Astrocyte of the cerebellum (primary cell): ENCODE measurements at regions of chr2 and their contacts with region 1.

Region 1: GRCh38 chr2:223459328-223459939 is 142.7 kb downstream of the SCG2 start:
- DNase-seq: no peak
- H3K4me3 ChIP-seq: no peak overlapping the region
- CTCF ChIP-seq: no peak

Region 2: DNA sequence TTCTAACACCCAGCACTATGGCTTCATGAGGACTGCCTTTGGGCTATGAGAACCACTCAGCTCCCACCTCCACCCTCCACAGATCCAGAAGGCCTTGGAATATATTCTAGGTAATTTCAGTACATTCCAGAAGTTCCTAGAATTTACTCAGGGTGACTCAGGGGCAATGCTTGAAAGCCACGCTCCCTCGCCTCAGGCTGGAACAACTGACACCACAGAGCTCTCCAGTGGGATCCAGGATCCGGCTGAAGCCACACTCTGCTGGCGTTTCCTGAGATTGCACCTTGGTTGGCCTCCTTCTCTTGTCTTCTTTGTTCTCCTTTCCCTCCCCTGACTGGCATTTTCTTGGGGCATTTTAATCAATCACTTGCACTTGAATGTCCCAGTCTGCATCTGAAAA is 500.1 kb before region 1 on chr2:
- in situ Hi-C with region 1: loop called (anchors 25 kb)
- DNase-seq: peak; percentile 73
- H3K4me3 ChIP-seq: no peak overlapping the region
- CTCF ChIP-seq: peak; percentile 62

Region 3: DNA sequence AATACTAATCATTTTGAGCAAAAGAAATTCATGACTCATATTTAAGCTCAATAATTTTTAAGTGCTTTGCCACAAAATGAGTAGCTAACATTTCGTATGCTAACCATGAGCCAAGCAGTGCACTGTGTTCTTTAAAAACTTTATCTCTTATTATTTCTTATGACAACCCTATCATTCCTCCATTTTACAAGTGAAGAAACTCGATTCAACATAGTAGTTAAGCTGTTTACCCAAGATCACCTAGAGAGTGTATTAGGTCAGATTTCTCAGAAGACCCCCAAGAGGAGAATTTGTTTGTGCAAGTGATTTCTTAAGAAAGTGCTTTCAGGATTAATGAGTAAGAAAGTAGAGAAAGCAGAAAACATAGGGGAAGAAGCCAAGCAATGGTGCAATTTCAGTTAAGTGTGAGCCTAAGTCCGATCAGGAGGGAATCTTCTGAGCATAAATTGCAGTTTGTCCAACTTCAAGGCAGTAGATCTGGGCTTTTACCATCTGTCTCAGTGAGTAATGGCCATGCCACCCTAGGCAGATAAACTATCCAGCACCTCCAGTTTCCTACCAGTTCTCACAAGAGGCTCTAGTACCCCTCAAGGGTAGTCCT is 60.0 kb before region 1 on chr2:
- in situ Hi-C with region 1: no loop called
- DNase-seq: no peak
- H3K4me3 ChIP-seq: no peak overlapping the region
- CTCF ChIP-seq: no peak

Region 4: DNA sequence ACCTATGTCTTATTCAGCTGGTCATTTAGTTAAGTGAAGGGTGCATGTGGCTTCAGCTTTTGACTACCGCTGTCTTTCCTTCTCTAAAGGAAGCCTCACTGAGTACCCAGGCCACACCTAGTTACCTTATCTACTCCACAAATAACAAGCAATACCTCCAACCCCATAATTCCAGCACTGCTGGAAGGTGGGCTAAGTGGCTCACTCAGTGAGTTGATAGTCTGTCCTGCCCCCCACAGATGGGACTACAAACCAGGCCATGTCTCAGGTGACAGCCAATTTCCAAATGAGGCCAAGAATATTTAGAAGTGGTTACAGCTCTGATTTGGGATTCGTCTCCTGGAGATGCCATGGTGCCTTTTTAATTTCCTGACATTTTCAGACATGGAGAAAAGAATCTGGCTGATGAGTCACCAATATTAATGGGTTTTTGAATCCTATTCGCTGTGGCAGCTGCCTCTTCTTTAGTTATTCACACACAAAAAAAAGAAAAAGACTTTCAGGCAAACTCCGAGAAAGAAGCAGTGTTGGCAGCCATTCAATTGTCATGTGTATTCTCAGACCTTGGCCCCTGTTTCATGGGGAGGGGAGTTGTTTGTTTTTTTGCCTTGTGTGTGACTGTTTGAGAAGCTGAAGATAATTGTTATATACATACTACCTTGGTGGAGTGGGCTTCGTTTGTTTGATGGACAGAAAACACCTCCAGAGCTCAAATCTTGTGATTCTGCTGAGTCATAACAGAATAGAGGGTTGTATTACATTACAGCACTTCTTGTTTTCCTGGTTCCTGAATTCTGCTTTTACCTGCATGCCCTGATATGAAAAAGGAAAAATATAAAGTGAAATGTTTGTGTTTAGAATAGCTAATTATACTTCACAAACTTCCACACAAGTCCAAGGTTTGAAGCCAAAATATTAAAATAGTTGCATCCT is 78.5 kb after region 1 on chr2:
- in situ Hi-C with region 1: no loop called
- DNase-seq: peak; percentile 28
- H3K4me3 ChIP-seq: no peak overlapping the region
- CTCF ChIP-seq: no peak

Region 5: DNA sequence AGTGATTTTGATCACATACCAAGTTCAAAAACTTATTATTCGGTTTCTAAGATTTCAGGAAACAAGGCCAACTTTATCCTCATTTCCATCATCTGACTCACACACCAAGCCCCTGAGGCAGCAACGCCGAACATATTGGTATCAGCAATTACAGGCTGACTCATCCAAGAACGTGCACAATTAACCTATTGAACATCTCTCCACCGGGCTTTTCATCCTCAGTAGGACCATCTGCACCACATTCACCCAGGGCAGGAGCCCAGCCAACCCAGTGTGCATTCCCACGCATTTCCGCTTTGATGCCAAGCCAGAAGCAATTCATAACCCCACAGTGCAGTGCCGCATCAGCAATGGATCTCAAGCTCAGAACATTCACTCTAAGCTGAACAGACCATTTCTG is 89.8 kb after region 1 on chr2:
- in situ Hi-C with region 1: no loop called
- DNase-seq: peak; percentile 98
- H3K4me3 ChIP-seq: no peak overlapping the region
- CTCF ChIP-seq: no peak